Transverse colon (tissue), 4 donors: ENCODE measurements at regions of chr22 and their contacts with region 1.

Region 1: GRCh38 chr22:38872172-38872830 is at the start of gene CBX6:
- DNase-seq: peak; percentile 93
- H3K4me3 ChIP-seq: peak within 1 kb of the TSS; percentile 54 to 71 (median 64)
- H3K27ac ChIP-seq: peak within 1 kb of the TSS; percentile 88 to 95 (median 90)
- H3K4me1 ChIP-seq: peaks cover 14 to 38% (median 21%) of the 10 kb centered on the region in 4 donors
- H3K27me3 ChIP-seq: peaks cover 36% of the 10 kb centered on the region
- CTCF ChIP-seq: no peak
- EP300 ChIP-seq: no peak
- POLR2A ChIP-seq: no peak
- total RNA-seq, gene CBX6: 14.5 to 42.6 (median 22.1) TPM

Region 2: DNA sequence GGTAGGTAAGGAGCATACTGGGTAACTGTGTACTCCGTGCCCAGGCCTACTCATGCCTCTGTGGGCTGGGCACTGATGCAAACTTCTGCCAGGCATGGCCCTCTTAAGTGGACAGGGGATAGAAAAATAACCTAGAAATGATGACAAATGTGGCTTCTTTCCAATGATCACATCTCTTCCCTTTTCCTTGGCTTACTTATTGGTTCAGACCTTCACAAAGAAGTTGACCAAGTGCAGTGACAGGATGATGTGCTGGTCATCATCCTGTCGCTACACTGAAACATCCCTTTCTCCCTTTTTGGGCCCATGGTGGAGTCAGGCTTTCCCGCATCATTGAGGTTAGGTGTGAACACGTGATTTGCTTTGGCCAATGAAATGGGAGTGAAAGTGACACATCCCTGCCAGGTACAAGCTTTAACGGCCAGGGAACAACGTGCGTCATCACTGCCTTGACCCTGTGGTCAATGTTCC is 53.3 kb after region 1 on chr22:
- in situ Hi-C with region 1: no loop called
- intact Hi-C with region 1: loop called (anchors 1 kb)
- DNase-seq: no peak
- H3K4me3 ChIP-seq: no peak overlapping the region
- H3K27ac ChIP-seq: peak overlapping the region in 2 of 4 donors; percentile 83 to 91
- H3K4me1 ChIP-seq: peaks cover 14 to 56% (median 35%) of the 10 kb centered on the region in 4 donors
- H3K27me3 ChIP-seq: no peaks in the 10 kb centered on the region
- CTCF ChIP-seq: no peak
- EP300 ChIP-seq: no peak
- POLR2A ChIP-seq: no peak

Region 3: DNA sequence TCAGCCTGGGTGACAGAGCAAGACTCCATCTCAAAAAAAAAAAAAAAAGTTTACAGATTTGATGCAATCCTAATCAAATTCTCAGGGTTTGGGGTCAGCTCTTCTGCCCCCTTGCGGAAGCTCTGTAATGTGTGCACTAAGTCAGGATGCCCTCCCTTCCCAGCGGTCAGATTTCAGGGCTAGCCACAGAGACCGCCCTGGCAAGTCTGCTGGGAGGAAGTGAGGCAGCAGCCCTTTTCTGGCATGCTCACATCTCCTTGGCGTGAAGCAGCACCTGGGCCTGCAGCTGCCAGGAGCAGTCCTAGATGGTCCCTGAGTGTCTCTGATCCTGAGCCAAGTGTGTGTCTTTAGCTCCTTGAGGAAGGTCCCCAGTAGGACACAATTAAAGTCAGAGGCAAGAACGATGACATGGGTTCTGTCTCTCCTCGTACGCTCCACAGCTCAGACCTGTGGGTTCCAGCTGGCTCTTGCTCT is 130.9 kb after region 1 on chr22:
- in situ Hi-C with region 1: loop called (anchors 10 kb)
- intact Hi-C with region 1: loop called (anchors 1 kb)
- DNase-seq: peak; percentile 83
- H3K4me3 ChIP-seq: no peak overlapping the region
- H3K27ac ChIP-seq: peak overlapping the region in 1 of 4 donors; percentile 24
- H3K4me1 ChIP-seq: peaks cover 0 to 6% (median 1%) of the 10 kb centered on the region in 4 donors
- H3K27me3 ChIP-seq: no peaks in the 10 kb centered on the region
- CTCF ChIP-seq: peak; percentile 66 to 86 (median 73)
- EP300 ChIP-seq: no peak
- POLR2A ChIP-seq: no peak

Region 4: GRCh38 chr22:39123751-39124601 is 251.7 kb after region 1 on chr22:
- in situ Hi-C with region 1: loop called in 3 of 4 experiments (anchors 10 to 25 kb)
- intact Hi-C with region 1: no loop called
- DNase-seq: no peak
- H3K4me3 ChIP-seq: no peak overlapping the region
- H3K27ac ChIP-seq: no peak overlapping the region
- H3K4me1 ChIP-seq: peaks cover 0 to 5% (median 2%) of the 10 kb centered on the region in 4 donors
- H3K27me3 ChIP-seq: no peaks in the 10 kb centered on the region
- CTCF ChIP-seq: no peak
- EP300 ChIP-seq: no peak
- POLR2A ChIP-seq: no peak